IMR-90 (cell line): ENCODE measurements at regions of chr11 and their contacts with region 1.

Region 1: GRCh38 chr11:102666331-102666957 is 39.1 kb downstream of the MMP27 start:
- DNase-seq: peak; percentile 60
- ATAC-seq: peak; percentile 95
- H3K4me3 ChIP-seq: no peak overlapping the region
- H3K27ac ChIP-seq: no peak overlapping the region
- H3K4me1 ChIP-seq: no peaks in the 10 kb centered on the region
- H3K27me3 ChIP-seq: peaks cover 3% of the 10 kb centered on the region; the same call in 1 of the 2 replicates
- CTCF ChIP-seq: peak; percentile 92
- POLR2A ChIP-seq: 0 out of 2 replicates have a peak, but pooled peaks have one; percentile 27
- RAD21 ChIP-seq: peak; percentile 94

Region 2: DNA sequence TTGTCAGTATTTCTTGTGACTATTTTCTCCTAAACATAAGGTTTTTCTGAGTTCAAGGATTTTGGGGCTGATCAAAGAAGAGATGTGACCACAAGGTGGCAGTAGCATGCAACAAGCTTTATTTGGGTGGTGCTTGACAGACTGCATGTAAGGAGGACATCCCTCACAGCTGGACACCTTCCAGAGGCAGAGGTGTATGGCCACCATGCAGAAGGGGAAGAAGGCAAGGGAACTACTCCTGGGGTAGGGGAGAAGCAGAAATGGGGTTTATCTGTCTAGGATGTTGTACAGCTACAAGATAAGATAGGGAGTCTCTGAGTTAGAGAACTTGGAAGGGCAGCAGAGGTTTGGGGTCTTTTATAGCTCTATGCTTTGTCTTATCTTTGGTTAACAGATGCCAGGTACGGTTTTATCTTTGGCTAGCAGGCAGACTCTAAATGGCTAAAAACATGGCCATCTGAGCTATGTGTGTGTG is 324.6 kb before region 1 on chr11:
- CTCF ChIA-PET with region 1: interaction called, 8 read pairs
- POLR2A ChIA-PET with region 1: no interaction called
- dilution Hi-C with region 1: no loop called
- in situ Hi-C with region 1: no loop called
- intact Hi-C with region 1: loop called (anchors 1 kb)
- DNase-seq: peak; percentile 87
- ATAC-seq: peak; percentile 63
- H3K4me3 ChIP-seq: no peak overlapping the region
- H3K27ac ChIP-seq: no peak overlapping the region
- H3K4me1 ChIP-seq: no peaks in the 10 kb centered on the region; the same call in 1 of the 2 replicates
- H3K27me3 ChIP-seq: no peaks in the 10 kb centered on the region
- CTCF ChIP-seq: peak; percentile 85
- POLR2A ChIP-seq: no peak
- RAD21 ChIP-seq: peak; percentile 74

Region 3: DNA sequence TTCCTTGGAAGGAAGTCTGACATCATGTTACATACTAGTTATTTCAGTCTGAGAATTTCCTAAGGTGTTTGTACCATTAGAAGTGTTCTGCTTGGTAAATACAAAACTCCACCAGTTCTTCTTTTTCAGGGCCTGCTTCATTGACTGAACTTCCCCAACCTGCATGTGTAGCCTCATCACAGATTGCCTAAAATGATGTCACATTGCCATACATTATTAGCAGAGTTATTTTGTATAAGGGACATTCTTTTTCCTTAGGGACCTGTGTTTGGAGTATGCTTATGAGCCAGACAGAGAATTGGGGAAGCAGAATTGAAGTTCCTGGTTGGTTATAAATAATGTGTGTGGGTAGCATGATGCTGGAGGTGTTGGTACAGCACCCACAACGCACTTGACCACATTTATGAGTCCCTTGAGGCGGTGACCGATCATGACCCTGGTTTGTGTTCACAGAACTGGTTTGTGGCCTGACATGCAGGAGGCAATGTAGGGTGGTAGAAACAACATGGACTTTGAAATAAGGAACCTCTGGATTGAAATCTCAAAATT is 119.4 kb before region 1 on chr11:
- CTCF ChIA-PET with region 1: no interaction called
- POLR2A ChIA-PET with region 1: no interaction called
- dilution Hi-C with region 1: no loop called
- in situ Hi-C with region 1: no loop called
- intact Hi-C with region 1: no loop called
- DNase-seq: no peak
- ATAC-seq: no peak
- H3K4me3 ChIP-seq: no peak overlapping the region
- H3K27ac ChIP-seq: no peak overlapping the region
- H3K4me1 ChIP-seq: no peaks in the 10 kb centered on the region
- H3K27me3 ChIP-seq: no peaks in the 10 kb centered on the region; the same call in 1 of the 2 replicates
- CTCF ChIP-seq: no peak
- POLR2A ChIP-seq: no peak
- RAD21 ChIP-seq: no peak

Region 4: GRCh38 chr11:102592634-102593581 is 73.5 kb before region 1 on chr11:
- CTCF ChIA-PET with region 1: no interaction called
- POLR2A ChIA-PET with region 1: no interaction called
- dilution Hi-C with region 1: no loop called
- in situ Hi-C with region 1: no loop called
- intact Hi-C with region 1: loop called (anchors 5 kb)
- DNase-seq: peak; percentile 20
- ATAC-seq: peak; percentile 54; the same call in 1 of the 2 replicates
- H3K4me3 ChIP-seq: no peak overlapping the region
- H3K27ac ChIP-seq: no peak overlapping the region
- H3K4me1 ChIP-seq: no peaks in the 10 kb centered on the region
- H3K27me3 ChIP-seq: no peaks in the 10 kb centered on the region
- CTCF ChIP-seq: peak; percentile 37
- POLR2A ChIP-seq: no peak
- RAD21 ChIP-seq: peak; percentile 33